ENCODE measurements at regions of chr16 and their contacts with region 1.

Region 1: DNA sequence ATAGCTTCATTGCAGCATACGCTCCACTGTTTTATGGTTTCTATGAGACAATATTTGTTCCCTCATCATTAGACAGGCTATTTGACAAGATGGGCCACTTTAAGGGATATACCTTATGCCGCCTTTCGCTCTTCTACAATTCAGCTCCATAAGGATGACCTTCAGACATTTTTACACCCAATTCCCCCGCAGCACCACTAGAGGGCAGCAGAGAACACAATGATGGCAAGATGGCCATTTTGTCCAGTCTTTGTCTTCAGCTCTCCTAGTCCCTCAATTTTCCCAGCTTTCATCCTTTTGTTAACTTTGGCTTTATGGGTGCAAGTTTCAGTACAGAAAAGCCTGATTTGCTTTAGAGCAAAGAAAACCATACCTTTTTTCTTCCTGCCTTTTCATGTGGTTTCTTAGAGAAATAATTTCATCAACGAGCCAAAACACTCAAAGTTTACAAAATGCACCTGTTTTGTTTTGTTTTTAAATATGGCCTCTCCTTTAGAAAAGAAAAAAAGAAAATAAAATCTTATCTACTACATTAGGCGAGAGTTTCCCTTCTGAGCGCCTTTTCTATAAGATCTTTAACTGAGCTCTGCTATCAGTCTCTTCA is 355.3 kb downstream of the TOX3 start:
- DNase-seq: peak; percentile 13 to 31 (median 29)
- H3K4me3 ChIP-seq: no peak overlapping the region
- H3K4me3 Mint-ChIP-seq: no peak overlapping the region
- H3K27ac ChIP-seq: no peak overlapping the region
- H3K27ac Mint-ChIP-seq: no peak overlapping the region
- H3K4me1 ChIP-seq: no peaks in the 10 kb centered on the region
- H3K4me1 Mint-ChIP-seq: no peaks in the 10 kb centered on the region
- H3K27me3 ChIP-seq: no peaks in the 10 kb centered on the region
- H3K27me3 Mint-ChIP-seq: no peaks in the 10 kb centered on the region

Region 2: GRCh38 chr16:52203096-52203495 is 11.5 kb after region 1 on chr16:
- CTCF ChIA-PET with region 1: interaction called, 20 read pairs
- POLR2A ChIA-PET with region 1: no interaction called
- intact Hi-C with region 1: no loop called
- DNase-seq: no peak
- H3K4me3 ChIP-seq: no peak overlapping the region
- H3K4me3 Mint-ChIP-seq: no peak overlapping the region
- H3K27ac ChIP-seq: no peak overlapping the region
- H3K27ac Mint-ChIP-seq: no peak overlapping the region
- H3K4me1 ChIP-seq: no peaks in the 10 kb centered on the region
- H3K4me1 Mint-ChIP-seq: no peaks in the 10 kb centered on the region
- H3K27me3 ChIP-seq: no peaks in the 10 kb centered on the region
- H3K27me3 Mint-ChIP-seq: no peaks in the 10 kb centered on the region

Region 3: DNA sequence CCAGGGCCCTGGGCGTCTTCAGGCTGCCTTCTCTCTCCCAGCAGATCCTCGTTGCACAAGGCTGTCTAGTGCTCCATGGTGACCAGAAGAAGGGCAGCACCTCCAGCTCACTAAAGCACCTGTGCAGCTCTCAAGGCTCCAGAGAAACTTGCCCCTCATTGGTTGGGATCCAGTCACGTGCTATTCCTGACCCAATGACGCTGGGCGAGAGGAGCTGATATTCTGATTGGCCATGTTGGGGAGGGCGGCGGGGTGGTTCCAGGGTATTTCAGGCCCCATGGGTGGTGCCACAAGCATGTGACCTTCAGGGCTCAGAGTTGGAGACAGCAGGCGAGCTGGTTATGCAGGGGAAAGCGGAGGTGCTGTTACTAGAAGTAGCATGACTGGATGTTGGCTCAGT is 46.2 kb after region 1 on chr16:
- CTCF ChIA-PET with region 1: no interaction called
- POLR2A ChIA-PET with region 1: no interaction called
- intact Hi-C with region 1: no loop called
- DNase-seq: no peak
- H3K4me3 ChIP-seq: no peak overlapping the region
- H3K4me3 Mint-ChIP-seq: no peak overlapping the region
- H3K27ac ChIP-seq: no peak overlapping the region
- H3K27ac Mint-ChIP-seq: no peak overlapping the region
- H3K4me1 ChIP-seq: no peaks in the 10 kb centered on the region
- H3K4me1 Mint-ChIP-seq: no peaks in the 10 kb centered on the region
- H3K27me3 ChIP-seq: no peaks in the 10 kb centered on the region
- H3K27me3 Mint-ChIP-seq: no peaks in the 10 kb centered on the region

Region 4: DNA sequence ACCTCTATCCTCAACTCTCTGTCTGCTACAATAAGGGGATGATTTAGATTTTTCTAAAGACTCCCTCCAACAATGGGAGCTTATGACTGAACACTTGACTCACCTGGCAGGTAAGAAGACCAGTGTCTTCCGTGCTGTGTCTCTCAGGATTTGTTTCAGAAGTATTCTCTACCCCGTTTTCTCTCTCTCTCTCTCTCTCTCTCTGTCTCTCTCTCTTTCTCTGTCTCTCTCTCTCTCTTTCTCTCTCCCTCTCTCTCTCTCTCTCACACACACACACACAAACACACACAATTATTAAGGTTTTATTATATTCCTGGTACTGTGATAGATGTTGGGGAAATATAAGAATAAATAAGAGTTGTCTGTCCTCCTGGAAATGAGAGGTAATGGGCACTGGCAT is 91.4 kb after region 1 on chr16:
- CTCF ChIA-PET with region 1: no interaction called
- POLR2A ChIA-PET with region 1: no interaction called
- intact Hi-C with region 1: no loop called
- DNase-seq: no peak
- H3K4me3 ChIP-seq: no peak overlapping the region
- H3K4me3 Mint-ChIP-seq: no peak overlapping the region
- H3K27ac ChIP-seq: no peak overlapping the region
- H3K27ac Mint-ChIP-seq: no peak overlapping the region
- H3K4me1 ChIP-seq: no peaks in the 10 kb centered on the region
- H3K4me1 Mint-ChIP-seq: no peaks in the 10 kb centered on the region
- H3K27me3 ChIP-seq: no peaks in the 10 kb centered on the region
- H3K27me3 Mint-ChIP-seq: no peaks in the 10 kb centered on the region

Region 5: DNA sequence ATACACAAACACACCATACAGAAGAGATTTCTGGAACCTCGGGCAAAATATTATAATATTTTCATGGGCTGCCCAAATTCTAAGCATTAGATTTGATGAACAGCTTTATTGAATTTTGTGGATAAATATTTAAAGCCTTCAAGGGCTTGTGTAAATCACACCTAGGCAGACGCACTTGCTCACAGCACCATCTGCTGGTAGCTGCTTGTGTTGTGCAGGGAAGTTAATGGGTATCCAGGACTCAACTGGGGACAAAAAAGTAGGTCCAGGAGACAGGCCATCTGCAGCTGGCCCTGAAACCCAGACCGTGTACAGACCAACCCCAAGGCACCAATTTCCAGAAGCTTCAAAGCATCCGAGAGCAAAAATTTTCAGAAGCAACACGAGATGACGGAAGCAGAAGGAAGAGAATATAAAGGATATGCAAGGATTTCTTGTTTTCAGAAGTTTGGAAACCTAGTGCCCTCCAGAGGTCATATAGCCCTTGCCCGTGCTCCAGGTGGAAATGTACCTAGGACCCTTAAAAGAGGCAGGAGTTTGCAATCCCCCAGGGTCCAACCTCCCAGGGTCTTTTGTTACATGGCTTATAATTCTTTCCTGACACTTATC is 721.0 kb after region 1 on chr16:
- CTCF ChIA-PET with region 1: no interaction called
- POLR2A ChIA-PET with region 1: no interaction called
- intact Hi-C with region 1: loop called (anchors 5 kb)
- DNase-seq: no peak
- H3K4me3 ChIP-seq: no peak overlapping the region
- H3K4me3 Mint-ChIP-seq: no peak overlapping the region
- H3K27ac ChIP-seq: no peak overlapping the region
- H3K27ac Mint-ChIP-seq: no peak overlapping the region
- H3K4me1 ChIP-seq: no peaks in the 10 kb centered on the region
- H3K4me1 Mint-ChIP-seq: peaks cover 0 to 2% (median 0%) of the 10 kb centered on the region in 4 donors
- H3K27me3 ChIP-seq: no peaks in the 10 kb centered on the region
- H3K27me3 Mint-ChIP-seq: peaks cover 0 to 2% of the 10 kb centered on the region in 2 donors

Measured in CD4-positive, alpha-beta memory T cell (primary cell).